ENCODE measurements at regions of chr19 and their contacts with region 1.

Region 1: DNA sequence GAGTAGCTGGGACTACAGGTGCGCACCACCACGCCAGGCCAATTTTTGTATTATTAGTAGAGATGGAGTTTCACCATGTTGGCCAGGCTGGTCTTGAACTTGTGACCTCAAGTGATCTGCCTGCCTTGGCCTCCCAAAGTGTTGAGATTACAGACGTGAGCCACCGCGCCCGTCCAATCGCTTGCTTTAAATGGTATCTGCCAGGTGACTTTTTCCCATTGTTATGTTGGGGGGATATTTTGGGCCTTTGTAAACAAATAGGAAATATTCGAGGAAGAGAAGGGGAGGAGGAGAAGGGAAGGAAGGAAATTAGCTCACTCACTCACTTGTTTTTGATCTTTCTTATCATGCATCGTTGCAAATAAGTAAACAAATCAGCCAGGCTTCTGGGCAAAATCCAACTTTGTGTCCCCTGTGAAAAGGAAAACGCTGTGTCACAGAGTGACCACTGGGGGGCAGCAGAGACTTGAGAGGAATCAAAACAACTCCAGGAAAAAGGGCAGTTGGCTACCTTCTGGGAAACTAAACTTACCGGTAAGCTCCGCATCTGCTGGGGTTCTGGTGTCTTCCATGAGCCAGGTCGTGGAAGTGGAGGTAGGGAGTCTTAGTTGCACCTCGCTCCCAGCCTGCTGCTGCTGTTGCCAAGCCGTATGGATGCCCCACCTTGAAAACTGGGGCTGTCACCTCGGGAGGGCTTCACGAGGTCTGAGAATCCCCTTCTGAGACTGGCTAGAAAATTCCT is 9.3 kb upstream of the RANBP3 start:
- DNase-seq: peak; percentile 79
- H3K4me3 ChIP-seq: no peak overlapping the region
- H3K27ac ChIP-seq: no peak overlapping the region
- H3K4me1 ChIP-seq: peaks cover 5% of the 10 kb centered on the region
- CTCF ChIP-seq: peak; percentile 98

Region 2: DNA sequence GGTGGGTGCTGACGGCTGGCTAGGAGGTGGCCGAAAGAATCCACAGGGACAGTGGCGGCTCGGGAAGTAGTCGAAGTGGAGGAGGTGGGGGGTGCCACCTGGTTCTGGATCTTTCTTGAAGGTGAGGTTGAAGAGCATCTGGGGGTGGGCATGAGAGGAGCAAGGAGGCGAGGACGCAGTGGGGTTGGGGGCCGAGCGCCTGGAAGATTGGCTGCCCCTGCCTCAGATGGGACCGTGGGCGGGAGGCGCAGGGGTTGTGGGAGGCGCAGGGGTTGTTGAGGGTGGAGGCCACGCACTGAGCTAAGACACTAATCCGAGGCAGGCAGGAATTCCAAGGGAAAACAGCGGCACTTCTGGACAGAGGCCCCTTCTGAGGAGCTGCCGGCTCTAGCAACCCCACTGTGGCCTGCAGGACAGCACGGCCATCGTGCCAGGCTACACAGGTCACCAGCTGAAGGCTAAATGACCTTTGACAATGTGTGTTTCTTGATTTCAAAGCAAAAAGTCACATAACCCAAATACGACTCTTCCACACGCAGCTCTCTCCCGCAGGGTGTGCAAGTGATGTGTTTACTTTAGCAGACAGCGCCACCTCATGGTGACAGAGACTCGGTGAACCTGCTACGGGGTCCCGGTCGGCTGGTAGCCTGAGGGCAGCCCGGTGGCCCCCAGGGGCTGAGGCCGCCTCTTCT is 34.8 kb after region 1 on chr19:
- CTCF ChIA-PET with region 1: interaction called, 3 read pairs
- POLR2A ChIA-PET with region 1: no interaction called
- intact Hi-C with region 1: loop called (anchors 1 kb)
- DNase-seq: peak; percentile 89
- H3K4me3 ChIP-seq: no peak overlapping the region
- H3K27ac ChIP-seq: no peak overlapping the region
- H3K4me1 ChIP-seq: no peaks in the 10 kb centered on the region
- CTCF ChIP-seq: peak; percentile 85